ENCODE measurements at regions of chr11 and their contacts with region 1.

Region 1: GRCh38 chr11:114257621-114258558 is 38.3 kb upstream of the NNMT start:
- DNase-seq: peak; percentile 72 to 95
- H3K4me3 ChIP-seq: no peak overlapping the region
- CTCF ChIP-seq: no peak
- POLR2A ChIP-seq: no peak

Region 2: GRCh38 chr11:114060392-114061350 is 197.2 kb before region 1 on chr11:
- intact Hi-C with region 1: loop called (anchors 5 kb)
- DNase-seq: peak in 1 of 2 donors; percentile 88
- H3K4me3 ChIP-seq: peak overlapping the region; percentile 94
- CTCF ChIP-seq: no peak
- POLR2A ChIP-seq: no peak

Measured in lower leg skin (tissue), 4 donors.